H1 (cell line): ENCODE measurements at regions of chr7 and their contacts with region 1.

Region 1: DNA sequence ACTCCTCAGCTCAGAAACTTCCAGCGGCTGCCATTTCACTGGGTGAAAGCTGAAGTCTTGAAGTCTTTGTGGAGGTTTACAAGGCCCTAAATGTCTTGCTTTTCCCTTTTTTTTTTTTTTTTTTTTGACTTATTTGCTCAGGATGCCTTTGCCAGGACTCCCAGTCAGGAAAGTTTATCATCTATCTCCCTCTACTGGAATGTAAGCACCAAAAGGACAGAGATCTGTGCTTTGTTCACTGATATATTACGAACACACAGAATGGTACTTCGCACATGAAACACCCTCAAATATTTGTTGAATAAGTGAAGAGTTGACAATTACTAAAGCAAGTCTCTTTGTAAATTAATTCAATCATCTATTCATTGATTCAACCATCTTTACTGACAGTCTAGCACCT is 23.2 kb downstream of the ABCB4 start:
- DNase-seq: no peak
- H3K4me3 ChIP-seq: no peak overlapping the region
- H3K27ac ChIP-seq: no peak overlapping the region
- H3K4me1 ChIP-seq: no peaks in the 10 kb centered on the region
- H3K27me3 ChIP-seq: no peaks in the 10 kb centered on the region
- CTCF ChIP-seq: no peak
- EP300 ChIP-seq: no peak
- POLR2A ChIP-seq: no peak
- RAD21 ChIP-seq: peak; percentile 26 to 36; a peak in 3 of 4 replicates

Region 2: DNA sequence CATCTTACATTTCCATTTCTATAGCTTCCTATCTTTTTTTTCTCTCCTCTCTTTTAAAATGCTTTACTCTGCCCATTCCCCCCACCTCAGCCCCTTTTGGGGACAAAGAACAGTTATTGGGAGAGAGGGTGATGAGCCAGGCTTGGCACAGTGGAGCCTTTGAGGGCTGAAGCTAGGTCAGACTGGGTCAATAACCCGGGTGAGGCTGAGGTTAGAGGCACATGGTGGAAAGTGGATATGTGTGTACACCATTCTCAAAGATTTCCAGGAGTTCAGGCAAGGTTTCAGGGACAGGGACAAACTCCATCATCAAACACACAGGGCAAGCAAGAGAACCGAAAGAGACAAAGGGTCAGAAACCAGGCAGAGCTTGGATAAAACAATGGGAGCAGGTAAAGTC is 11.7 kb after region 1 on chr7:
- CTCF ChIA-PET with region 1: interaction called, 12 read pairs
- POLR2A ChIA-PET with region 1: no interaction called
- DNase-seq: no peak
- H3K4me3 ChIP-seq: no peak overlapping the region
- H3K27ac ChIP-seq: no peak overlapping the region
- H3K4me1 ChIP-seq: peaks cover 0 to 5% (median 3%) of the 10 kb centered on the region in 4 experiments; a peak in 4 of 7 replicates
- H3K27me3 ChIP-seq: no peaks in the 10 kb centered on the region
- CTCF ChIP-seq: no peak
- EP300 ChIP-seq: no peak
- POLR2A ChIP-seq: no peak
- RAD21 ChIP-seq: no peak